Sigmoid colon (tissue), 7 donors: ENCODE measurements at regions of chr5 and their contacts with region 1.

Region 1: DNA sequence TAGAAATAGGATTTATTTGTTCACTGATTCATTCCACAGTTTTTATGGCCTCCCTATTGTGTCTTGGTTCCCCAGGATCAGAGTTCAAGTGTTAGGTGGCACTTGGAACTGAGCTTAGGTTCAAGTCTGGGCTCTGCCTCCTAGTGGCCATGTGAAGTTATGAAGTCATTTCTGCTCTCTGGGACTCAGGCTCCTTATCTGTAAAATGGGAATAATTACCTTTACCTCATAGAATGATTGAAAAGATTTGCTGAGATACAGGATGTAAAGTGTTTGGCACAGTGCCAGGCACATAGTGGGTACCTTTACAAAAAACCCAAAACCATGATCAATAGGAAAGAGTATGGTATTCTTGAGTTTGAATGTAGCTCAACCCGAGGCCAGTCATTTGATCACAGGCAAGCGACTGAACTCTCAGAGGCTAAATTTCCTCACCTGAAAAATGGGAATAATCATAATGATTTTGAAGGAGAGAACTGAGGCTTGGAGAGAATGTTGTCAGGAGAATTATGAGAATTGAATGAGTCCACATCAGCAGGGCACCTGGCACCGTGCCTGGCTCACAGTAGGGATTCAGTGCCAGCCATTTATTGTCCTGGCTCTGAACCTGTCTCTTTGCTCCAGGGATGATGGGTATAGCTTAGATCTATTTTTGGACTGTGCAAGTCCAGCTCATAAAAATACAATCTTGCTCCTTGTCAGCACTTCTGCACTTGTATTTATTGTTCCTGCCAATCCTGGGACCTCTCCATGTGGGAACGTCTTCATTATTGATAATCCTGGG is 10.8 kb downstream of the NSG2 start:
- DNase-seq: no peak
- H3K4me3 ChIP-seq: no peak overlapping the region
- H3K27ac ChIP-seq: no peak overlapping the region
- H3K4me1 ChIP-seq: no peaks in the 10 kb centered on the region
- H3K27me3 ChIP-seq: no peaks in the 10 kb centered on the region
- CTCF ChIP-seq: no peak
- EP300 ChIP-seq: no peak
- POLR2A ChIP-seq: no peak

Region 2: GRCh38 chr5:174311531-174312269 is 255.4 kb after region 1 on chr5:
- intact Hi-C with region 1: loop called (anchors 10 kb)
- DNase-seq: no peak
- H3K4me3 ChIP-seq: peak overlapping the region in 3 of 4 donors; percentile 41 to 54 (median 43)
- H3K27ac ChIP-seq: no peak overlapping the region
- H3K4me1 ChIP-seq: peaks cover 0 to 13% (median 10%) of the 10 kb centered on the region in 4 donors
- H3K27me3 ChIP-seq: peaks cover 2 to 35% (median 4%) of the 10 kb centered on the region in 3 donors
- CTCF ChIP-seq: peak; percentile 22 to 88 (median 43)
- EP300 ChIP-seq: no peak
- POLR2A ChIP-seq: no peak